Activated CD4-positive, alpha-beta memory T cell treated with anti-CD3 and anti-CD28 coated beads for 36 hours (primary cell): ENCODE measurements at regions of chr14 and their contacts with region 1.

Region 1: GRCh38 chr14:24710403-24711112 is 76.6 kb upstream of the GZMB start:
- DNase-seq: peak; percentile 69
- H3K4me3 Mint-ChIP-seq: no peak overlapping the region
- H3K27ac Mint-ChIP-seq: no peak overlapping the region
- H3K4me1 Mint-ChIP-seq: peaks cover 4% of the 10 kb centered on the region
- H3K27me3 Mint-ChIP-seq: peaks cover 6% of the 10 kb centered on the region

Region 2: GRCh38 chr14:24605435-24606190 is 104.9 kb before region 1 on chr14:
- CTCF ChIA-PET with region 1: interaction called, 12 read pairs
- POLR2A ChIA-PET with region 1: no interaction called
- intact Hi-C with region 1: no loop called
- DNase-seq: peak; percentile 78
- H3K4me3 Mint-ChIP-seq: peak overlapping the region; percentile 60
- H3K27ac Mint-ChIP-seq: peak overlapping the region; percentile 81
- H3K4me1 Mint-ChIP-seq: peaks cover 26% of the 10 kb centered on the region
- H3K27me3 Mint-ChIP-seq: peaks cover 3% of the 10 kb centered on the region

Region 3: GRCh38 chr14:24669651-24670050 is 40.9 kb before region 1 on chr14:
- CTCF ChIA-PET with region 1: no interaction called
- POLR2A ChIA-PET with region 1: no interaction called
- intact Hi-C with region 1: no loop called
- DNase-seq: no peak
- H3K4me3 Mint-ChIP-seq: no peak overlapping the region
- H3K27ac Mint-ChIP-seq: peak overlapping the region; percentile 71
- H3K4me1 Mint-ChIP-seq: peaks cover 81% of the 10 kb centered on the region
- H3K27me3 Mint-ChIP-seq: no peaks in the 10 kb centered on the region

Region 4: GRCh38 chr14:24690492-24690891 is 20.1 kb before region 1 on chr14:
- CTCF ChIA-PET with region 1: interaction called, 12 read pairs
- POLR2A ChIA-PET with region 1: interaction called, 4 read pairs
- intact Hi-C with region 1: no loop called
- DNase-seq: no peak
- H3K4me3 Mint-ChIP-seq: no peak overlapping the region
- H3K27ac Mint-ChIP-seq: no peak overlapping the region
- H3K4me1 Mint-ChIP-seq: peaks cover 5% of the 10 kb centered on the region
- H3K27me3 Mint-ChIP-seq: peaks cover 4% of the 10 kb centered on the region

Region 5: GRCh38 chr14:24721775-24722174 is 11.2 kb after region 1 on chr14:
- CTCF ChIA-PET with region 1: interaction called, 51 read pairs
- POLR2A ChIA-PET with region 1: no interaction called
- intact Hi-C with region 1: no loop called
- DNase-seq: no peak
- H3K4me3 Mint-ChIP-seq: no peak overlapping the region
- H3K27ac Mint-ChIP-seq: no peak overlapping the region
- H3K4me1 Mint-ChIP-seq: no peaks in the 10 kb centered on the region
- H3K27me3 Mint-ChIP-seq: peaks cover 2% of the 10 kb centered on the region

Region 6: GRCh38 chr14:24774187-24774915 is 63.8 kb after region 1 on chr14:
- CTCF ChIA-PET with region 1: no interaction called
- POLR2A ChIA-PET with region 1: no interaction called
- intact Hi-C with region 1: no loop called
- DNase-seq: no peak
- H3K4me3 Mint-ChIP-seq: no peak overlapping the region
- H3K27ac Mint-ChIP-seq: no peak overlapping the region
- H3K4me1 Mint-ChIP-seq: no peaks in the 10 kb centered on the region
- H3K27me3 Mint-ChIP-seq: peaks cover 14% of the 10 kb centered on the region

Region 7: GRCh38 chr14:24789378-24789884 is 78.9 kb after region 1 on chr14:
- CTCF ChIA-PET with region 1: no interaction called
- POLR2A ChIA-PET with region 1: no interaction called
- intact Hi-C with region 1: no loop called
- DNase-seq: no peak
- H3K4me3 Mint-ChIP-seq: no peak overlapping the region
- H3K27ac Mint-ChIP-seq: no peak overlapping the region
- H3K4me1 Mint-ChIP-seq: no peaks in the 10 kb centered on the region
- H3K27me3 Mint-ChIP-seq: peaks cover 8% of the 10 kb centered on the region

Region 8: DNA sequence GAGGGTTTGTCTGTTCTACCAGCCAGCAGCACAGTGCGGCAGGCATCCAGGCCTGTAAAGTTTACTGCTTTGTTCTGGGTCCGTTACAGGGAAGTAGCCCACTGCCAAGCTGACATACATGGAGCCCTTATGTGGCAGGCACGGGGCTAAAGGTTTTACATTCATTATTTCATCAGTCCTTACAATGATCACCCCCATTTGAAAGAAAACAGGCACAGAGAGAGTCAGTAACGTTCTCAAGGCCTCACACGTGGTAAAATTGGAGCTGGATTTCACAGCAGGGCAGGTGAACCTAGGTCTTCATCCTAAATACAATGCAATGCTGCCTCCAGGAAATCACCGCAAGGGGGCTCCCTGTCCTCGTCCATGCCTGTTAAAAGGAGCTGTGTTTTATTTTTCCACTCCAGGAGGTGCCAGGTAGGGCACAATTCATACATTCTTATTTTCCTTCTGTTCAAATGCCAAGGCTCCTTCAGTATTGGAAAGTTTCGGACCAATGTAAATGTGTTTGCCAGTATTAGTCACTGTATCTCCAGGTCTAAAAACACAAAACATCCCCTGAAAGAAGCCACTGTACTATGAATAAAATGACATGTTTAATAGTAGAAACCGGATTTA is 95.6 kb after region 1 on chr14:
- CTCF ChIA-PET with region 1: interaction called, 11 read pairs
- POLR2A ChIA-PET with region 1: no interaction called
- intact Hi-C with region 1: no loop called
- DNase-seq: peak; percentile 56
- H3K4me3 Mint-ChIP-seq: no peak overlapping the region
- H3K27ac Mint-ChIP-seq: no peak overlapping the region
- H3K4me1 Mint-ChIP-seq: no peaks in the 10 kb centered on the region
- H3K27me3 Mint-ChIP-seq: peaks cover 2% of the 10 kb centered on the region

Region 9: GRCh38 chr14:25150934-25151790 is 440.6 kb after region 1 on chr14:
- CTCF ChIA-PET with region 1: interaction called, 10 read pairs
- POLR2A ChIA-PET with region 1: no interaction called
- intact Hi-C with region 1: loop called (anchors 1 kb)
- DNase-seq: no peak
- H3K4me3 Mint-ChIP-seq: no peak overlapping the region
- H3K27ac Mint-ChIP-seq: no peak overlapping the region
- H3K4me1 Mint-ChIP-seq: no peaks in the 10 kb centered on the region
- H3K27me3 Mint-ChIP-seq: peaks cover 3% of the 10 kb centered on the region